ENCODE measurements at regions of chr3 and their contacts with region 1.

Region 1: GRCh38 chr3:155701882-155702465 is 42.9 kb downstream of the PLCH1 start:
- DNase-seq: no peak
- H3K4me3 Mint-ChIP-seq: no peak overlapping the region
- H3K27ac Mint-ChIP-seq: no peak overlapping the region
- H3K4me1 Mint-ChIP-seq: no peaks in the 10 kb centered on the region
- H3K27me3 Mint-ChIP-seq: peaks cover 15% of the 10 kb centered on the region

Region 2: DNA sequence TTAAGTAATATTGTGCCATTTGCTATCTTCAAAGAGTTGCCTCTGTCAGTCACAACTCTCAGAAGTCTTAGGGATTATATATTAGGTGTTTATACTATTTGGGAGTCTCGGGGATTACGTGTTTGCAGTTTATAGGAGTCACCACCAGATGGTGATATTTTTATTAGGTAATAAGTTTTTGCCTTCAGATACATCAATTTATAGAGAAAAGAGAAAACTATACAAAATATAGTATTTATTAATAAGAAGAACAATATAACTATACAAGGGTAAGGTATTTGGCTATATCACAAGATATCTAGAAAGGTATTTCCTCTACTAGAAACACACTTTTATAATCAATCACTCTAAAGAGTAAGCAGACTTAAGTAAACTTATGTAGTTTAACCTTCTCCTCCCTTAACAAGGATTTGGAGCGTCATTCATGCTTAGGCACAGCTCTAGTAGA is 1367.0 kb before region 1 on chr3:
- intact Hi-C with region 1: loop called (anchors 5 kb)
- DNase-seq: no peak
- H3K4me3 Mint-ChIP-seq: no peak overlapping the region
- H3K27ac Mint-ChIP-seq: no peak overlapping the region
- H3K4me1 Mint-ChIP-seq: no peaks in the 10 kb centered on the region
- H3K27me3 Mint-ChIP-seq: peaks cover 15% of the 10 kb centered on the region

Region 3: GRCh38 chr3:155352900-155353490 is 349.0 kb before region 1 on chr3:
- intact Hi-C with region 1: loop called (anchors 1 kb)
- DNase-seq: no peak
- H3K4me3 Mint-ChIP-seq: no peak overlapping the region
- H3K27ac Mint-ChIP-seq: no peak overlapping the region
- H3K4me1 Mint-ChIP-seq: no peaks in the 10 kb centered on the region
- H3K27me3 Mint-ChIP-seq: peaks cover 5% of the 10 kb centered on the region

Region 4: GRCh38 chr3:155382396-155383042 is 319.5 kb before region 1 on chr3:
- intact Hi-C with region 1: loop called (anchors 2 kb)
- DNase-seq: no peak
- H3K4me3 Mint-ChIP-seq: no peak overlapping the region
- H3K27ac Mint-ChIP-seq: no peak overlapping the region
- H3K4me1 Mint-ChIP-seq: no peaks in the 10 kb centered on the region
- H3K27me3 Mint-ChIP-seq: peaks cover 1% of the 10 kb centered on the region

Region 5: GRCh38 chr3:155744010-155744625 is 42.1 kb after region 1 on chr3:
- intact Hi-C with region 1: no loop called
- DNase-seq: peak; percentile 12
- H3K4me3 Mint-ChIP-seq: peak overlapping the region; percentile 64
- H3K27ac Mint-ChIP-seq: no peak overlapping the region
- H3K4me1 Mint-ChIP-seq: peaks cover 19% of the 10 kb centered on the region
- H3K27me3 Mint-ChIP-seq: peaks cover 65% of the 10 kb centered on the region

Measured in activated T-helper 2 cell treated with anti-CD3 and anti-CD28 coated beads, Interferon-gamma antibody, Interleukin-2, Interleukin-4, amounts not matched to agents 10 μg/mL and 5 μg/mL and 100 μg/mL, durations not matched to agents 14 hours and 24 hours and 36 hours (primary cell).